ENCODE measurements at regions of chrX and their contacts with region 1.

Region 1: GRCh38 chrX:40700640-40701342 is 34.6 kb downstream of the MED14 start:
- DNase-seq: no peak
- H3K4me3 ChIP-seq: no peak overlapping the region
- H3K27ac ChIP-seq: no peak overlapping the region
- H3K4me1 ChIP-seq: no peaks in the 10 kb centered on the region
- H3K27me3 ChIP-seq: peaks cover 0 to 12% of the 10 kb centered on the region in 2 donors
- CTCF ChIP-seq: no peak
- POLR2A ChIP-seq: no peak

Region 2: DNA sequence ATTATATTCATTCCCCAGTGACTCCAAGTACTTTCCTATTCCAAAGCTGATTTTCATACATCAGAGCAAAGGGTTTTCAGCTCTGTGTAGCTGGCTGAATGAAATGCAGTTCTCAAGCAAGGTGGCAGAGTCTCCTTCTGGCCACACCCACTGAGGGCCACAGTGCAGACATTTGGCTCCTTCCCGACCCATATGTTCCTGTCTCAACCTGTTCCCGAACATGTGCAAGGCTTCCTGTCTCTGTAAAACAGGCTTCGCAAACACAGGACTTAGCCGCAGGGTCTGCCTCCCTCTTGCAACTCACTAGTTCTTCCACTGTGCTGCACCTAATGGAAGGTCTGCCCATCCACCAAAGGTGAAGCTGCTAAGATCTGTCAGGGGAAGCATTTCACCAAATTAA is 1650.4 kb before region 1 on chrX:
- intact Hi-C with region 1: no loop called
- DNase-seq: no peak
- H3K4me3 ChIP-seq: no peak overlapping the region
- H3K27ac ChIP-seq: no peak overlapping the region
- H3K4me1 ChIP-seq: no peaks in the 10 kb centered on the region
- H3K27me3 ChIP-seq: peaks cover 0 to 39% of the 10 kb centered on the region in 2 donors
- CTCF ChIP-seq: no peak
- POLR2A ChIP-seq: no peak

Region 3: DNA sequence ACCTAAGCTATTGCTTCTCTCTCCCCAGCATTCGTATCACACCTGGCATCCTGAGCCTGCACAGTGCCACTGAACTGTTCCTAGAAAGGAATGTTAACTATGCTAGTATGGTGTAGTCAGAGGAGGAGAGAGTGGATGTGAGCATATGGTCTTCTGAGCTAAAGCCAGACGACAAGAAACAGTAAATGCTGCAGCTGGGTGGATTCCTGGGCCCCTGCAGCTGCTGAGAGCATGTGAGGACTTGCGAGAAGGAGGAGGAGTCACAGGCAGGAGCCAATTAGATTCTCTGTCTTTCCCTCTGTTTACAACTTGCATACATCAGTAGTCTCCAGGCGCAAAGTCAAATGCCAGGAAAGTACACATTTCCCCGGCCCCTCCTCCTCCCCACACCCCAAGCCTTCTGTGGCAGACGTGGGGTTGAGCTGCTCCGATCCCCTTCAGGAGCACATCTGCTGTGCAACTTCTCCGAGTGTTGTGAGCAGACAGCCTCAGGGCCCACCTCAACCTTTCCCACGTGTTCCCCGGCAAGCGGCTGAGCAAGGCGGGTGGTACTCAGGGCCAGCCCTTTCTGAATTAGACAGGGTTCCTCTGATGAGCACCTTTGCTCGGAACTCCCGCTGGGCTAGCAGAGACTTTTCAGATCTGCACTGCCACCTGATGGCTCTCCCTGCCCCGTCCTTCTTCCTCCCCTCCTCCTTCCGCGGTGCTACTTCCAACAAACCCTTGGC is 228.7 kb before region 1 on chrX:
- intact Hi-C with region 1: no loop called
- DNase-seq: peak; percentile 42 to 52
- H3K4me3 ChIP-seq: peak overlapping the region in 1 of 3 donors; percentile 17
- H3K27ac ChIP-seq: peak overlapping the region in 1 of 2 donors; percentile 50
- H3K4me1 ChIP-seq: peaks cover 0 to 4% of the 10 kb centered on the region in 2 donors
- H3K27me3 ChIP-seq: peaks cover 2 to 50% of the 10 kb centered on the region in 2 donors
- CTCF ChIP-seq: peak in 1 of 3 donors; percentile 28
- POLR2A ChIP-seq: no peak

Region 4: DNA sequence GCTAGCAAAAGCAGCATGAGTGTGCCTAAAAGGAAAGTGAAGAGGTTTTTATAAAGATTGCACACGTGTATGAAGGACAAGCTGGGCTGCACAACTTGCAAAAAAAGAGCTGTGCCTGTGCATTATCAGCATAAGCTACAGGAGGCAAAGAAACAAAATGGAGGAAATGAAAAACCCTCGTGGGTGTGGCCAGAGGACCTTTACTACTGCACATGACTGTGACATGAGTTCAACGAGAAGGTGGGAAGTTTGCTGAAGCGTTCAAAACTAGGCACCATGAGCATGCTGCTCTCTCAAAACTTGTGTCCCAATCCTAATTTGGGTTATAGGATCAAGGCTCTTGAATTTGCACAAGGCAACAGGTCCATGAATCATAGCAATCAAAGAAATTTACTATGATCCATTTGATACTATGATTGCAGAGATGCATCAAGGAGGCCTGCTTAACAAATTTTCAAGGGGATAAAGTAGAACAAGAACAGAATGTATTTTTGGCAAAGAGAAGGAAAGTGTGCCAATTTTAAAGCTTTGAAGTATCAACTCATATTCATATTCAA is 15.4 kb before region 1 on chrX:
- intact Hi-C with region 1: loop called (anchors 2 kb)
- DNase-seq: no peak
- H3K4me3 ChIP-seq: no peak overlapping the region
- H3K27ac ChIP-seq: no peak overlapping the region
- H3K4me1 ChIP-seq: no peaks in the 10 kb centered on the region
- H3K27me3 ChIP-seq: peaks cover 0 to 23% of the 10 kb centered on the region in 2 donors
- CTCF ChIP-seq: no peak
- POLR2A ChIP-seq: no peak